CD8-positive, alpha-beta T cell (primary cell): ENCODE measurements at regions of chr2 and their contacts with region 1.

Region 1: GRCh38 chr2:37389989-37390765 is 45.7 kb downstream of the QPCT start:
- DNase-seq: peak in 8 of 9 experiments; percentile 28 to 89 (median 64)
- ATAC-seq: peak; percentile 93
- H3K4me3 ChIP-seq: no peak overlapping the region
- H3K4me3 Mint-ChIP-seq: peak overlapping the region; percentile 0
- H3K27ac ChIP-seq: peak overlapping the region in 1 of 2 experiments; percentile 67
- H3K27ac Mint-ChIP-seq: peak overlapping the region; percentile 80
- H3K4me1 ChIP-seq: peaks cover 23% of the 10 kb centered on the region
- H3K4me1 Mint-ChIP-seq: peaks cover 3% of the 10 kb centered on the region
- H3K27me3 ChIP-seq: no peaks in the 10 kb centered on the region
- H3K27me3 Mint-ChIP-seq: no peaks in the 10 kb centered on the region
- CTCF ChIP-seq: no peak

Region 2: DNA sequence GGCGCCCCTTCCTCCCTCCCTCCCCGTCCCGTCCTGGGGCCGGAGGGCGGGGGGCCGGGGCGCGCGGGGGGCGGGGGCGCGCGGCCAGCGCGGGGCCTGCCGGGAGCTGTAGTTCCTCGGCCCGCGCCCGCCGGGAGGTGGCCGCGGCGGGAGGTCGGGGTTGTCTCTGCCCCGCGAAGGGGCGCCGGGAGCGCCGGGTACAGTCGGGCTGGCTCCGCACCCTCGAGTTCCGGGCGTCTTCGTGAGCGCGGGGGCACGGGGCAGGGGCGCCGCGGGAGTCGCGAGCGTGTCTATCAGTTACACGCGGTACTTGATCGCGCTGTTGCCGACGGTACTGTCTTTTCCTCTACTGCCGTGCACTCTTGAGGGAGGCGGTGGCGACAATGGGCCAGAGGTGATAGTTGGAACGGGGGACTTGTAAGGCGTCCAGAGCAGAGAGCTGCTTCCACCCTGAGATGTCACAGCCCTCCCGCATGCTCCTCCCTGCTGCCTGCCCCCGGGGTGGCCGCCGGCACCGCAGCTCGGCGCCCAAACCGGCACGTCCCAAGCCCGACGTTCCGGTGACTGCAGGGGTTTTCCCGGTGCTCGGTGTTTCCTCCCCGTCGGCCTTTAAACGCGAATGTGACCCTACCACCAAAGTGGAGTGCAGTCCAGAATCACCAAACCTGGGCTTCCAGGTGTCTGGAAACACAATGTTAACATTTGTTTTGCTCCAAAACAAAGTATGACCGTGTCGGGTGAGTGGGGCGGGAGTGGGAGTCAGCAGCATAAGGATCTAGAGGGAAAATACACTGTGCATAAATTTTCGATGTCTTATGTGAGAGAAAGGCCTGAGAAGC is 65.2 kb before region 1 on chr2 and contains the start of gene PRKD3:
- CTCF ChIA-PET with region 1: no interaction called
- POLR2A ChIA-PET with region 1: no interaction called
- intact Hi-C with region 1: loop called in 1 of 2 experiments (anchors 2 kb)
- DNase-seq: peak in 8 of 9 experiments; percentile 13 to 84 (median 58)
- ATAC-seq: peak; percentile 75
- H3K4me3 ChIP-seq: peak within 1 kb of the TSS; percentile 81 to 84
- H3K4me3 Mint-ChIP-seq: peak within 1 kb of the TSS; percentile 98
- H3K27ac ChIP-seq: peak within 1 kb of the TSS; percentile 68 to 71
- H3K27ac Mint-ChIP-seq: peak within 1 kb of the TSS; percentile 97
- H3K4me1 ChIP-seq: peaks cover 25% of the 10 kb centered on the region
- H3K4me1 Mint-ChIP-seq: peaks cover 35% of the 10 kb centered on the region
- H3K27me3 ChIP-seq: peaks cover 0 to 8% of the 10 kb centered on the region in 2 experiments
- H3K27me3 Mint-ChIP-seq: peaks cover 3% of the 10 kb centered on the region
- CTCF ChIP-seq: no peak
- total RNA-seq, gene PRKD3: 37.2 to 43.8 TPM

Region 3: GRCh38 chr2:37402636-37403035 is 12.5 kb after region 1 on chr2:
- CTCF ChIA-PET with region 1: interaction called, 22 read pairs
- POLR2A ChIA-PET with region 1: interaction called, 4 read pairs
- intact Hi-C with region 1: no loop called
- DNase-seq: no peak
- ATAC-seq: no peak
- H3K4me3 ChIP-seq: no peak overlapping the region
- H3K4me3 Mint-ChIP-seq: no peak overlapping the region
- H3K27ac ChIP-seq: no peak overlapping the region
- H3K27ac Mint-ChIP-seq: no peak overlapping the region
- H3K4me1 ChIP-seq: no peaks in the 10 kb centered on the region
- H3K4me1 Mint-ChIP-seq: no peaks in the 10 kb centered on the region
- H3K27me3 ChIP-seq: no peaks in the 10 kb centered on the region
- H3K27me3 Mint-ChIP-seq: no peaks in the 10 kb centered on the region
- CTCF ChIP-seq: no peak

Region 4: DNA sequence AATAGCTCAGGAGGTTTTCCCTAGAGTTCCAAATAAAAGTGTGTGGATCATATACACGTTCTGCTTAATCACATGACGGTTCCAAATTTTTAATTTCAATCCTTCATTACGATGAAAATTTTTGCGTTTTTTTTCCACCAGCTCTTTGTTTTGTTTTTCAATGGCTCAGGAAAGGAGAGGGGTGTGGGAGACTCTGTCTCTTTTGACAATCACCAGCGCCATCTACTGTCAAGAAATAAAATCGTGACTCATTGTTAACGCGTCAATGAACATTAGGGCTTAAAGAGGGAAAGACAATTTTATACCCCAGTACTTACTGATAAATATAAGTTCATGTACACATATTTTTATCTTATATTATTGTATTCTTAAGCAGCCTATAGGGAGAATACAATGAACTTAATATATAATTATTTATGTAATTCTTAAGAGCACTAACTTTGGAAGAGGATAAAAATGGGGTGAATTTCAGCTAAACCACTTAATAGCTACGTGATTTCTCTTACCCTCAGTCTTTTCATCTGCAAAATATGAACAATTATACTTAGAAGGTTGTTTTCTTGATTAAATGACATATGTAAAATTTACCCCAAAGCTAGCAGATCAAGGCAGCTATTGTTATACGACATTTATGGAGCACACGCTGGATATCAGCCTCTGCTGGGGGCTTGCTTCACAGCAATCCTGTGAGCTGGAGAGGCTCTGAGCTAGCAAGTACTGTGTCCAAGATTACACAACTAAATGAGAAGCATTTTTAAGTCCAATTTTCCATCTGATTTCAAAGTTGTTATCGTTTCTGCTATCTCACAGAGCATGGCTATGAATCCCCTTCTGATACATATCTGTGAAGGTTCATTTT is 487.5 kb after region 1 on chr2:
- CTCF ChIA-PET with region 1: interaction called, 214 read pairs
- POLR2A ChIA-PET with region 1: interaction called, 8 read pairs
- intact Hi-C with region 1: no loop called
- DNase-seq: peak in 3 of 9 experiments; percentile 39 to 76 (median 67)
- ATAC-seq: peak; percentile 63
- H3K4me3 ChIP-seq: no peak overlapping the region
- H3K4me3 Mint-ChIP-seq: no peak overlapping the region
- H3K27ac ChIP-seq: no peak overlapping the region
- H3K27ac Mint-ChIP-seq: no peak overlapping the region
- H3K4me1 ChIP-seq: no peaks in the 10 kb centered on the region
- H3K4me1 Mint-ChIP-seq: peaks cover 2% of the 10 kb centered on the region
- H3K27me3 ChIP-seq: no peaks in the 10 kb centered on the region
- H3K27me3 Mint-ChIP-seq: peaks cover 21% of the 10 kb centered on the region
- CTCF ChIP-seq: peak; percentile 82

Region 5: DNA sequence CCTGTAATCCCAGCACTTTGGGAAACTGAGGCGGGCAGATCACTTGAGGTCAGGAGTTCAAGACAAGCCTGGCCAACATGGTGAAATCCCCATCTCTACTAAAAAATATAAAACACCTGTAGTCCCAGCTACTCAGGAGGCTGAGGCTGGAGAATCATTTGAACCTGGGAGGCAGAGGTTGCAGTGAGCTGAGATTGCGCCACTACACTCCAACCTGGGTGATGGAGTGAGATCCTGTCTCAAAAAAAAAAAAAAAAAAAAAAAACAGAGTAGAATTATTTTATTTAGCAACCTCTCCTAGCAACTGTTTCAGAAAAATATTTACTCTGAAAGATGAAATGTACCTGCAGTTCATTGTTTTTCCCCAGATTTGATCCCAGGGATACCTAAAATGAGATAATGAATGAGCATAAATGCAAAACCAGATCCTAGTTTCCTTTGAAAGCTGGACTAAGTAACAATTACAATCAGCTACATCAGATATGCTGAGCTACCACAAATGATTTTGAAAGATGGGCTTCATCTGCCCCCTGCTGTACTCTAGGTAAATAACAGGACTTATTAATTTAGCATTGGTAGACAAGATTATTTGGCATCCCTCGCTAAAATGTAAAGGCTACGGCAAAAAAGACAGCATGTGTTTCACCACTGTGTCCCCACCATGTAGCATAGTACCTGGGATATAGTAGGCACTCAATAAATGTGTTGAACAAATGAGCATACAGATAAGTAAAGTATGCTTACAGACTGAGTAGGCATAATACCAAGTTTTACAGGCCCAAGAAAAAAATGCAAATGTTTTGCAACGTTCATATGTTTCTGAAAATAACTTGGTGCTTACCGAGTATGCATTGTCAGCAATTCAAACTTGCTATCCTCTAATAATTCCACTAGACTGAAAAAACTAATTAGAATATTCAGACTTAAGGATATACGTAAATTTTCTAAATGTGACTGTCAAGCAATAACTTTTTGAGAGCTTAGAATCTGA is 884.4 kb after region 1 on chr2:
- CTCF ChIA-PET with region 1: no interaction called
- POLR2A ChIA-PET with region 1: no interaction called
- intact Hi-C with region 1: loop called in 1 of 2 experiments (anchors 10 kb)
- DNase-seq: peak in 3 of 9 experiments; percentile 21 to 64 (median 63)
- ATAC-seq: peak; percentile 36
- H3K4me3 ChIP-seq: no peak overlapping the region
- H3K4me3 Mint-ChIP-seq: no peak overlapping the region
- H3K27ac ChIP-seq: no peak overlapping the region
- H3K27ac Mint-ChIP-seq: no peak overlapping the region
- H3K4me1 ChIP-seq: no peaks in the 10 kb centered on the region
- H3K4me1 Mint-ChIP-seq: no peaks in the 10 kb centered on the region
- H3K27me3 ChIP-seq: no peaks in the 10 kb centered on the region
- H3K27me3 Mint-ChIP-seq: peaks cover 2% of the 10 kb centered on the region
- CTCF ChIP-seq: peak; percentile 46